CD8-positive, alpha-beta T cell (primary cell): ENCODE measurements at regions of chr6 and their contacts with region 1.

Region 1: DNA sequence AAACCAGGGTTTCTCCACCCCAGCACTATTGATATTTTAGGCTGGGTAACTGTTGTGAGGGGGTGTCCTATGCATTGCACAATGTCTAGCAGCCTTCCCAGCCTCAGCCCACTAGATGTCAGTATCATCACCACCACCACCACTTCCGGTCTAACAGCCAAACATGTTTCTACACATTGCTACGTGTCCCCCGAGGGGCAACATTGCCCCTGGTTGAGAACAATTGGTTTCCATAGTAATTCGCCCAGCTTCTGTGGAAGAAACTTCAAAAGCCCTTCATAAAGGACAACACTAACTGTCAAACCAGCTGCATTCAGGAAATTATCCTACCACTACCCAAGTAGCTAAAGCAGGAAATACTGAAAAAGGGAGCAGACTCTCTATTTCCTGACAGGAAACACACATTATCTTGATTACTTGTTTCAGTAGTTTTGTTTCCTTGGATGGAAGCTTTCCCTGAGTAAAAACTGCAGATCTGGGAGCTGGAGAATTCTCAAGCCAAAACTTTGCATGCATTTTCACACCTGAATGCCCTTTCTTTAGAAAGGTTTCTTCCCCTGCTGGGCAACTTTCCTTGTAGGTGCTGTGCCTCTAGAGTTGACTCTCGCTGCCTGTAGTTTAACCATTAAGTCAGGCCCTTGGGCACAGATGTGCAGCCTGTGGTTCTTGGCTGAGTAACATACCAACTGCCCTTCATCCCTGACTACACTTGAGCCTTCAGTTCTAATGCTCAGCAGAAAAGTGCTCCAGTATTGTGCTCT is 23.6 kb downstream of the PKHD1 start:
- DNase-seq: peak; percentile 10 to 80 (median 59)
- ATAC-seq: peak; percentile 84
- H3K4me3 ChIP-seq: peak overlapping the region; percentile 17 to 27
- H3K4me3 Mint-ChIP-seq: peak overlapping the region; percentile 78
- H3K27ac ChIP-seq: no peak overlapping the region
- H3K27ac Mint-ChIP-seq: peak overlapping the region; percentile 79
- H3K4me1 ChIP-seq: peaks cover 13% of the 10 kb centered on the region
- H3K4me1 Mint-ChIP-seq: peaks cover 11% of the 10 kb centered on the region
- H3K27me3 ChIP-seq: no peaks in the 10 kb centered on the region
- H3K27me3 Mint-ChIP-seq: no peaks in the 10 kb centered on the region
- CTCF ChIP-seq: peak; percentile 49

Region 2: DNA sequence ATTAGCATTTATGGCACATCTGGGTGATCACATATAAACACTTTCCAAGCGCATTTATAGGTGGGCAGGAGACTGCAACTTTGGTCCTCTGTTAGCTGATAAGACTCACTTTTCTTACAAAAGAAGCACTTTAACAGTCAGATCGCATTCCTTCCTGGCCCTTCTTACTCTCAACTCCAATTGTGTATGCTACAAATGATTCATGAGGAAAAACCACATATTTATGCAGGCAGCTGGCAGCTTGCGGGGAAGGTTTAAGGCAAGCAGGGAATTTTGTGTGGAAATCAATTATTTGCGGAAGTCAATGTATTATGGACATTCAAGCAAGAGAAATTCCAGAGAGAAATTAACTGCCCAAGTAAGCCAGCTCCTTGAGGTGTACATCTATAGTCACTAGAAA is 170.4 kb before region 1 on chr6:
- CTCF ChIA-PET with region 1: no interaction called
- POLR2A ChIA-PET with region 1: no interaction called
- intact Hi-C with region 1: no loop called
- DNase-seq: no peak
- ATAC-seq: no peak
- H3K4me3 ChIP-seq: no peak overlapping the region
- H3K4me3 Mint-ChIP-seq: no peak overlapping the region
- H3K27ac ChIP-seq: no peak overlapping the region
- H3K27ac Mint-ChIP-seq: no peak overlapping the region
- H3K4me1 ChIP-seq: no peaks in the 10 kb centered on the region
- H3K4me1 Mint-ChIP-seq: no peaks in the 10 kb centered on the region
- H3K27me3 ChIP-seq: no peaks in the 10 kb centered on the region
- H3K27me3 Mint-ChIP-seq: no peaks in the 10 kb centered on the region
- CTCF ChIP-seq: no peak

Region 3: DNA sequence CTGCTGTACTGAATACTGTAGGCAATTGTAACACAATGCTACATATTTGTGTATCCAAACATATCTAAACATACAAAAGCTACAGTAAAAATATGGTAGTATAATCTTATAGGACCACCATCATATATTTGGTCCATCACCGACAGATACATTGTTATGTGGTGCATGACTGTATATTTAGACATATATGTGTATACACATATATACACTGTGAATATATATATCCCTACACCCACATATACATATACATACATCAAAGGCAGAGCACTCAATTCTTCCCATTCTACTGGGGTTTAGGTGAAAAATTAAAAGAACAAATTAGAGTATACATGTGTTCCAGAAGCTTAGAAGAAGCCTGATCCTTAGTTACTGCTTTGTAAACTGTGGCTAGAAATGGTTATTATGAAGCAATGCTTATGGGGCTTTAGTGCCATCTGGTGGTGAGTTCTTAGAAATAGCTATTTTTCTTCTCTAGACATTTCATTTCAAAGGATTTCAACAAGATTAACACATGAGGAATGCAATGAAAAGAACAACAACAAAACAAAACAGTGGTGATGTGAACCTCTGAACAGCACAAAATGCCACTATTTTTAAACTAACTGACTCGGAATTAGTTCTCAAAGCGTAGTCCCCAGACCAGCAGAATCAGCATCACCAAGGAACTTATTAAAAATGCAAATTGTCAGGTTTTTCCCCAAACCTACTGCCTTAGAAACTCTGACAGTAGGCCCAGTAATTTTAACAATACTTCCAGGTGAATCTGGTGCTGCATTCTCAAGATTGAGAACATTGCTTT is 14.3 kb before region 1 on chr6:
- CTCF ChIA-PET with region 1: interaction called, 31 read pairs
- POLR2A ChIA-PET with region 1: no interaction called
- intact Hi-C with region 1: no loop called
- DNase-seq: peak in 2 of 9 experiments; percentile 36 to 47
- ATAC-seq: no peak
- H3K4me3 ChIP-seq: no peak overlapping the region
- H3K4me3 Mint-ChIP-seq: no peak overlapping the region
- H3K27ac ChIP-seq: no peak overlapping the region
- H3K27ac Mint-ChIP-seq: no peak overlapping the region
- H3K4me1 ChIP-seq: no peaks in the 10 kb centered on the region
- H3K4me1 Mint-ChIP-seq: no peaks in the 10 kb centered on the region
- H3K27me3 ChIP-seq: peaks cover 0 to 2% of the 10 kb centered on the region in 2 experiments
- H3K27me3 Mint-ChIP-seq: peaks cover 26% of the 10 kb centered on the region
- CTCF ChIP-seq: peak; percentile 69

Region 4: DNA sequence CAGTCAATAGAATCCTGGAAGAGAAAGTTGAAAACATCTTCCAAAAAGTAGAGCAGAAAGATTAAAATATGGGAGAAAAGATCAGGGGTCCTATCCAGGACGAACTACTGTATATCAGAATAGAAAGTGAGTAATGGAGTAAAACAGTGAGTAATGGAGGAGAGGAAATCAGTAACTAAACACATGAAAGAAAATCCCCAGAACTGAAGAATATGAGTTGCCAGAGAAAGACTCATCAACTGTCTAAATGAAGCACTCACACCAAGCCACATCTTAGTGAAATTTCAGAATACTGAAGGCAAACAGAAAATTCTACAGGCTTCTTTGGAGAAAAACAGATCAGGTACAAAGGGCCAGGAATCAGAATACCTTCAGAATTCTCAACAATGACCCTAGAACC is 137.3 kb after region 1 on chr6:
- CTCF ChIA-PET with region 1: no interaction called
- POLR2A ChIA-PET with region 1: no interaction called
- intact Hi-C with region 1: no loop called
- DNase-seq: no peak
- ATAC-seq: no peak
- H3K4me3 ChIP-seq: no peak overlapping the region
- H3K4me3 Mint-ChIP-seq: no peak overlapping the region
- H3K27ac ChIP-seq: no peak overlapping the region
- H3K27ac Mint-ChIP-seq: no peak overlapping the region
- H3K4me1 ChIP-seq: no peaks in the 10 kb centered on the region
- H3K4me1 Mint-ChIP-seq: no peaks in the 10 kb centered on the region
- H3K27me3 ChIP-seq: no peaks in the 10 kb centered on the region
- H3K27me3 Mint-ChIP-seq: peaks cover 6% of the 10 kb centered on the region
- CTCF ChIP-seq: no peak